ENCODE measurements at regions of chr9 and their contacts with region 1.

Region 1: DNA sequence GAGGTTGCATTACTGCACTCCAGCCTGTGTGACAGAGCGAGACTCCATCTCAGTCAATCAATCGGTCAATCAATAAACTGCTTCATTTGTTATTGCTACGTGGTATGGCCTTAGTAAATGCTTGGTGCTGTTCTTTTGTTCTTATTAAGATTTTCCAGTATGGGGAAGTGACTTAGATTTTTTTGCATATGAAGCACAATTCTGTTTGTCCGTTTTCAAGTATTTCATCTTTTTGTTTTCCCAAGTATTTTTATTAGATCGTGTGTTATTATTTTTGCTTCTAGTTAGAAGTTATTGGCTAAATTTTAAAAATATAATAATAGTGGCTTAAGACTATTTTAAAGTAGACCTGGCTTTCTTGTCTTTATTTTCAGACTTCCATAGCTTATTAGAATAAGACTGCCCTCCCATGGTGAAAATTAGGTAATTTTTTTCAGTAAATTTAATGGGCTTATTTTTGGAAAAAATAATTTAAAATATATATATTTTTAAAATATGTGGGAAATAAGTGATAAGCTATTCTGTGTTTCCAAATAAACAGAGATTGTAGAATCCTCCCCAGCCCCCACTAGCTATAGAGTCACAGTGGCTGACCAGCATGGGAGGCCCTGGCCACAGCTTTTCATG is 14.7 kb upstream of the OMD start:
- DNase-seq: peak in 1 of 5 donors; percentile 4
- H3K4me3 ChIP-seq: no peak overlapping the region
- H3K4me3 Mint-ChIP-seq: no peak overlapping the region
- H3K27ac ChIP-seq: no peak overlapping the region
- H3K27ac Mint-ChIP-seq: no peak overlapping the region
- H3K4me1 ChIP-seq: peaks cover 11% of the 10 kb centered on the region
- H3K4me1 Mint-ChIP-seq: peaks cover 4 to 10% (median 9%) of the 10 kb centered on the region in 4 donors
- H3K27me3 ChIP-seq: no peaks in the 10 kb centered on the region
- H3K27me3 Mint-ChIP-seq: no peaks in the 10 kb centered on the region

Region 2: GRCh38 chr9:92247296-92247695 is 191.7 kb before region 1 on chr9:
- CTCF ChIA-PET with region 1: no interaction called
- POLR2A ChIA-PET with region 1: no interaction called
- intact Hi-C with region 1: no loop called
- DNase-seq: no peak
- H3K4me3 ChIP-seq: no peak overlapping the region
- H3K4me3 Mint-ChIP-seq: no peak overlapping the region
- H3K27ac ChIP-seq: no peak overlapping the region
- H3K27ac Mint-ChIP-seq: no peak overlapping the region
- H3K4me1 ChIP-seq: no peaks in the 10 kb centered on the region
- H3K4me1 Mint-ChIP-seq: no peaks in the 10 kb centered on the region
- H3K27me3 ChIP-seq: no peaks in the 10 kb centered on the region
- H3K27me3 Mint-ChIP-seq: no peaks in the 10 kb centered on the region

Region 3: GRCh38 chr9:92342825-92343488 is 96.1 kb before region 1 on chr9:
- CTCF ChIA-PET with region 1: no interaction called
- POLR2A ChIA-PET with region 1: interaction called, 3 read pairs
- intact Hi-C with region 1: loop called (anchors 10 kb)
- DNase-seq: no peak
- H3K4me3 ChIP-seq: no peak overlapping the region
- H3K4me3 Mint-ChIP-seq: no peak overlapping the region
- H3K27ac ChIP-seq: no peak overlapping the region
- H3K27ac Mint-ChIP-seq: no peak overlapping the region
- H3K4me1 ChIP-seq: no peaks in the 10 kb centered on the region
- H3K4me1 Mint-ChIP-seq: peaks cover 0 to 2% (median under 1%) of the 10 kb centered on the region in 4 donors
- H3K27me3 ChIP-seq: no peaks in the 10 kb centered on the region
- H3K27me3 Mint-ChIP-seq: no peaks in the 10 kb centered on the region

Region 4: GRCh38 chr9:92512622-92513021 is 73.6 kb after region 1 on chr9:
- CTCF ChIA-PET with region 1: no interaction called
- POLR2A ChIA-PET with region 1: no interaction called
- intact Hi-C with region 1: no loop called
- DNase-seq: no peak
- H3K4me3 ChIP-seq: no peak overlapping the region
- H3K4me3 Mint-ChIP-seq: no peak overlapping the region
- H3K27ac ChIP-seq: no peak overlapping the region
- H3K27ac Mint-ChIP-seq: no peak overlapping the region
- H3K4me1 ChIP-seq: no peaks in the 10 kb centered on the region
- H3K4me1 Mint-ChIP-seq: peaks cover 0 to 1% (median 0%) of the 10 kb centered on the region in 4 donors
- H3K27me3 ChIP-seq: no peaks in the 10 kb centered on the region
- H3K27me3 Mint-ChIP-seq: no peaks in the 10 kb centered on the region